Transverse colon (tissue), 4 donors: ENCODE measurements at regions of chrX and their contacts with region 1.

Region 1: GRCh38 chrX:153507484-153508178 is 9.8 kb upstream of the ATP2B3 start:
- DNase-seq: peak; percentile 83
- H3K4me3 ChIP-seq: no peak overlapping the region
- H3K27ac ChIP-seq: no peak overlapping the region
- H3K4me1 ChIP-seq: no peaks in the 10 kb centered on the region
- H3K27me3 ChIP-seq: no peaks in the 10 kb centered on the region
- CTCF ChIP-seq: peak; percentile 75 to 86 (median 76)
- EP300 ChIP-seq: no peak
- POLR2A ChIP-seq: no peak

Region 2: DNA sequence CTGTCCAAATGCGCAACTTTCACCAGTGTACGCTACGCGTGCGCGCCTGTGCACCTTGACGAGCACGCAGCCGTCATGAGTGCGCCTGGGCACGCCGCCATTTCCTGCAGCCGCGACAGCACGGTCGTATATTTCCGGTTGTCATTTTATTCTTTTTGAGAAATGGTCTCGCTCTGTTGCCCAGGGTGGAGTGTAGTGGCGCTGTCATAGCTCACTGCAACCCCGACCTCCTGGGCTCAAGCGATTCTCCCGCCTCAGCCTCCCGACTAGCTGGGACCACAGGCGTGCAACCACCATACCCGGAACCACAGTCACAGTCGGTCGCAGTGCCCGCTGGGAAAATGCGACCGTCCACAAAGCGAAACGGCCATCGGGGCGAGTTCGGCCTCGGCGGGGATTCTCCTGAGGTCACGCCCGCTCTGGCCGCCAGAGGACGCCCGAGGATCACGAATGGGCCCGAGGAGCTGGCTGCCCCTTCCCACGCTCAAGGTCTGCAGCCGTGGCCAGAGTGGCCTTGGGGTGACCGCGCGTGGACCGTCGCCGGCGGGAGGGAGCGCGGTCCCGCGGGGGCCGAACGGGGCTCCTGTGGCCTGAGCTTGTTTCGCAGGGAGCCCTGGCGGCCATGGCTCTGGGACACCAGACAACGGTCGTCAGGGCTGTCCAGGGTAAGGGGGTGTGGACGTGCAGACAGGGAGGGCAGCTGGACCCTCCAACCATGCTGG is 475.1 kb before region 1 on chrX:
- in situ Hi-C with region 1: no loop called
- intact Hi-C with region 1: loop called (anchors 10 kb)
- DNase-seq: peak; percentile 73
- H3K4me3 ChIP-seq: peak overlapping the region in 3 of 4 donors; percentile 11 to 39 (median 21)
- H3K27ac ChIP-seq: peak overlapping the region in 3 of 4 donors; percentile 24 to 45 (median 36)
- H3K4me1 ChIP-seq: peaks cover 0 to 4% (median 0%) of the 10 kb centered on the region in 4 donors
- H3K27me3 ChIP-seq: no peaks in the 10 kb centered on the region
- CTCF ChIP-seq: peak; percentile 70 to 89 (median 79)
- EP300 ChIP-seq: no peak
- POLR2A ChIP-seq: no peak

Region 3: GRCh38 chrX:153423652-153424051 is 84.0 kb before region 1 on chrX:
- in situ Hi-C with region 1: no loop called
- intact Hi-C with region 1: no loop called
- DNase-seq: no peak
- H3K4me3 ChIP-seq: no peak overlapping the region
- H3K27ac ChIP-seq: no peak overlapping the region
- H3K4me1 ChIP-seq: no peaks in the 10 kb centered on the region
- H3K27me3 ChIP-seq: no peaks in the 10 kb centered on the region
- CTCF ChIP-seq: no peak
- EP300 ChIP-seq: no peak
- POLR2A ChIP-seq: no peak

Region 4: GRCh38 chrX:153791104-153791852 is 283.6 kb after region 1 on chrX:
- in situ Hi-C with region 1: no loop called
- intact Hi-C with region 1: no loop called
- DNase-seq: no peak
- H3K4me3 ChIP-seq: no peak overlapping the region
- H3K27ac ChIP-seq: no peak overlapping the region
- H3K4me1 ChIP-seq: peaks cover 0 to 24% (median 20%) of the 10 kb centered on the region in 4 donors
- H3K27me3 ChIP-seq: no peaks in the 10 kb centered on the region
- CTCF ChIP-seq: no peak
- EP300 ChIP-seq: no peak
- POLR2A ChIP-seq: no peak

Region 5: GRCh38 chrX:154804957-154805695 is 1297.5 kb after region 1 on chrX and contains the start of gene MPP1:
- in situ Hi-C with region 1: no loop called
- intact Hi-C with region 1: no loop called
- DNase-seq: peak; percentile 84
- H3K4me3 ChIP-seq: peak within 1 kb of the TSS; percentile 28 to 81 (median 62)
- H3K27ac ChIP-seq: peak within 1 kb of the TSS; percentile 72 to 89 (median 86)
- H3K4me1 ChIP-seq: peaks cover 3 to 34% (median 11%) of the 10 kb centered on the region in 4 donors
- H3K27me3 ChIP-seq: no peaks in the 10 kb centered on the region
- CTCF ChIP-seq: no peak
- EP300 ChIP-seq: no peak
- POLR2A ChIP-seq: peak; percentile 52
- total RNA-seq, gene MPP1: 28.7 to 44.1 (median 32.8) TPM